ENCODE measurements at regions of chr7 and their contacts with region 1.

Region 1: GRCh38 chr7:77326696-77327628 is 89.2 kb downstream of the GSAP start:
- DNase-seq: peak; percentile 74
- H3K4me3 ChIP-seq: no peak overlapping the region
- H3K27ac ChIP-seq: no peak overlapping the region
- H3K4me1 ChIP-seq: peaks cover 45% of the 10 kb centered on the region
- H3K27me3 ChIP-seq: no peaks in the 10 kb centered on the region
- CTCF ChIP-seq: no peak

Region 2: GRCh38 chr7:77217474-77218185 is 109.3 kb before region 1 on chr7:
- CTCF ChIA-PET with region 1: no interaction called
- dilution Hi-C with region 1: no loop called
- in situ Hi-C with region 1: no loop called
- intact Hi-C with region 1: no loop called
- DNase-seq: peak; percentile 20
- H3K4me3 ChIP-seq: no peak overlapping the region
- H3K27ac ChIP-seq: no peak overlapping the region
- H3K4me1 ChIP-seq: no peaks in the 10 kb centered on the region
- H3K27me3 ChIP-seq: no peaks in the 10 kb centered on the region
- CTCF ChIP-seq: no peak

Region 3: DNA sequence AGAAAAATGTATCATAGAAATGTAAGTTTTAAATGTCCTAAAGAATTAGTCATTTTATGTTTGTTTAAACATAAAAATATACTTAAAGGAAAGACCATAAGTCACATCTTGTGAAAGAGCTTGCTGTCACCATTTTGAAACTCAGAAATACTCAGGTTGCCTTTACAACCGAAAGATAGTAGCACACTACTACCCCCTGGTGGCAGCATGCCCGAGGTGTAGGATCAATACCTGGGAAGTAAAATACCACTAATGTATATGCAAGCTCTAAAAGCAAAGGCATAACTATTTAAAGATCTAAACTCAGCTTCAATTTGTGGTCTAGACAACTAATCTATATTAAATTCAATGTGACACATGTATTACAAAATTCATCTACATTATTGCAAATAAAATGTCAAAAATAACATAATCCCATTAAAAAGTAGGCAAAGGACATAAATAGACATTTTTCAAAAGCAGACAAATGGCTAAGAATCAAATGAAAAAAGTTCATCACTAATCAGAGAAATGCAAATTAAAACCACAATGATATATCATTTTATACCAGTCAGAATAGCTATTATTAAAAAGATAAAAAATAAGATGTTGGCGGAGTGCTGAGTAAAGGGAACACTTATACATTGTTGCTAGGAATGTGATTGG is 79.6 kb before region 1 on chr7:
- CTCF ChIA-PET with region 1: interaction called, 10 read pairs
- dilution Hi-C with region 1: no loop called
- in situ Hi-C with region 1: loop called in 1 of 2 experiments (anchors 5 kb)
- intact Hi-C with region 1: loop called (anchors 1 kb)
- DNase-seq: peak; percentile 56
- H3K4me3 ChIP-seq: no peak overlapping the region
- H3K27ac ChIP-seq: no peak overlapping the region
- H3K4me1 ChIP-seq: no peaks in the 10 kb centered on the region
- H3K27me3 ChIP-seq: no peaks in the 10 kb centered on the region
- CTCF ChIP-seq: peak; percentile 82 to 90

Region 4: GRCh38 chr7:77306231-77307067 is 20.5 kb before region 1 on chr7:
- CTCF ChIA-PET with region 1: no interaction called
- dilution Hi-C with region 1: no loop called
- in situ Hi-C with region 1: no loop called
- intact Hi-C with region 1: loop called (anchors 2 kb)
- DNase-seq: no peak
- H3K4me3 ChIP-seq: no peak overlapping the region
- H3K27ac ChIP-seq: no peak overlapping the region
- H3K4me1 ChIP-seq: peaks cover 26% of the 10 kb centered on the region
- H3K27me3 ChIP-seq: no peaks in the 10 kb centered on the region
- CTCF ChIP-seq: no peak